ENCODE measurements at regions of chr11 and their contacts with region 1.

Region 1: DNA sequence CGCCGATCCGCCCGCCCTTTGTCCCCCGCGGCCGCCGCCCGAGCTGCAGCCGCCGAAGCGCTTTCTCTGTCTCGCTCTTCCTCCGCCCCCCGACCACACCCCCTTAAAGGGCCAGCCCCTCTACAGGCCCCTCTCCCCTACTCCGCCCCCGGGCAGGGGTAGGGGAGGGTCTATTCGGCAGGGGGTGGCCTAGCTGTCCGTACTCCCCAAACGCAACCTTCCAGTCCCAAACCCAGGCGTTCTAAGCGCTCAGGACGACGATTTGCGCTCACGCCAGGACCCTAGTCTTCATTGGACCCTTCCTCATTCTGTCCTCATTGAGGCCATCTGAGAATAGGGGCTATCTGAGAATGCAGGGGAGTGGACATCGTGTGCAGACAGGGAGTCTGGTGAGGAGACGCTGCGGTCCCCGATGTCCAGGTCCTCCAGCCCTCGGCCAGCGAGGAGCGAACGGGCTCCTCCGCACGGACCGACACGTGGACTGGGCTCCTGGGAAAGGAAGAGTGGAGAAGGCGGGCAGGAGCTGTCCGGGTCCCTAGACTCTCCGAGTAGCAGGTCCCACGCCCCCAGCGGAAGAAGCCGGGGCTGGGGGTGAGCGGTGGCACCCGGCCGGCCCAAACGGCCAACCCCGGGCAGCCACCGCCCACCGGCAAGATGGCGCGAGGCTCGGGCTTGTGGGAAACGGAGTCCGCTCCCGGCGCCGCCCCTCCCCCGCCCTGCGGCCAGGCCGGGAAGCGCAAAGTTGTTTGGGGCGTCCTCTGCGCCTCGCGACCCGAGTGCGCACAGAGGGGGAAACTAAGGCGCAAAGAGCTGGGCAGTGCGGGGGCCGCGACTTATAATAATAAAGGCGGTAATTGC is at the start of gene PPP1R14B:
- DNase-seq: no peak
- ATAC-seq: peak; percentile 50
- H3K4me3 ChIP-seq: peak within 1 kb of the TSS; percentile 99 to 100
- H3K27ac ChIP-seq: peak within 1 kb of the TSS; percentile 94
- H3K4me1 ChIP-seq: peaks cover 36 to 76% of the 10 kb centered on the region in 2 experiments
- H3K27me3 ChIP-seq: no peaks in the 10 kb centered on the region
- CTCF ChIP-seq: no peak
- POLR2A ChIP-seq: peak; percentile 42
- RAD21 ChIP-seq: no peak
- total RNA-seq, gene PPP1R14B: 332 TPM

Region 2: GRCh38 chr11:64074239-64074638 is 172.9 kb before region 1 on chr11:
- CTCF ChIA-PET with region 1: no interaction called
- POLR2A ChIA-PET with region 1: no interaction called
- RAD21 ChIA-PET with region 1: no interaction called
- intact Hi-C with region 1: no loop called
- DNase-seq: no peak
- ATAC-seq: peak; percentile 31; the same call in 1 of the 2 replicates
- H3K4me3 ChIP-seq: no peak overlapping the region
- H3K27ac ChIP-seq: no peak overlapping the region
- H3K4me1 ChIP-seq: peaks cover 0 to 3% of the 10 kb centered on the region in 2 experiments; a peak in 1 of 4 replicates
- H3K27me3 ChIP-seq: no peaks in the 10 kb centered on the region
- CTCF ChIP-seq: no peak
- POLR2A ChIP-seq: no peak
- RAD21 ChIP-seq: no peak

Region 3: DNA sequence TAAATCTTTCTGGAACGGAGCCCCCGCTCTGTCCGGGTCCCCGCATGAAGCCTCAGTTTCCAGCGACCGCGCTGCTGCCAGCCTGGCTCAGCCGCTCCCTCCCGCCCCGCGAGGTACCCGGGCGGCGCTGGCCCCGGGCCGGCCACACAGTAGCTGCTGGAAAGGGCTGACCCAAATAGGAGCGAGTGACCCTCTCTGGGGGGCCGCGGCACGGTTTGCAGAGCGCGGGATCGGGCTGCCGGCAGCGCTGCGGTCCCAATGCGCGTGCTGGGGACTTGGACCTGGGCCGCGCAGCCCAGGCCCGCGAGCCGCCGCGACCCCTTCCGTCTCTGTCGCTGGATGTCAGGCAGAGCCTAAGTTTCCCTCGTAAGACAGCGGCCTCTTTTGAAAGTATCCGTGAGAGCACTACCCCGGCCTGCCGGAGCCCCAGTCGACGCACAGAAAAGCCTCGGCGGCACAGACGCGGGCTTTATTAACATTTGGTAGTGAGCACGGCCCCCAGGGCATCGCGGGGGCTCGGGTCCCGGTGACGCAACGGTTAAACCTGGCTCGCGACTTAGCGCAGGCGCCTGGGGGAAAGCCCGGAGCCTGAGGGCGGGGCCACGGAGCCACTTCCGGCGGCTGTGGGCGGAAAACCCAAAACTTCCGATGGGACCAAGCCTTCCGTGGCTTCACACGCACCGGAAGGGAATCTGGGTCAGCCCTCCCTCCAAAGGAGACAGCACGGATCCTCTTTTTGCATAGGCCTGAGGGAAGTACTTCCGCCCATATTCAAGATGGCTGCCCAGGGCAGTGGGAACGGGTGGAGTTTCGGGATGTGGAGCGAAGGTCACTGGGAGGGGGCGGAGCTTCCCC is 22.5 kb after region 1 on chr11:
- CTCF ChIA-PET with region 1: interaction called, 11 read pairs
- POLR2A ChIA-PET with region 1: interaction called, 29 read pairs
- RAD21 ChIA-PET with region 1: no interaction called
- intact Hi-C with region 1: no loop called
- DNase-seq: peak; percentile 99
- ATAC-seq: peak; percentile 83
- H3K4me3 ChIP-seq: peak overlapping the region; percentile 72 to 98
- H3K27ac ChIP-seq: peak overlapping the region; percentile 95
- H3K4me1 ChIP-seq: peaks cover 18 to 31% of the 10 kb centered on the region in 2 experiments; a peak in 3 of 4 replicates
- H3K27me3 ChIP-seq: no peaks in the 10 kb centered on the region
- CTCF ChIP-seq: no peak
- POLR2A ChIP-seq: peak; percentile 14
- RAD21 ChIP-seq: no peak

Region 4: DNA sequence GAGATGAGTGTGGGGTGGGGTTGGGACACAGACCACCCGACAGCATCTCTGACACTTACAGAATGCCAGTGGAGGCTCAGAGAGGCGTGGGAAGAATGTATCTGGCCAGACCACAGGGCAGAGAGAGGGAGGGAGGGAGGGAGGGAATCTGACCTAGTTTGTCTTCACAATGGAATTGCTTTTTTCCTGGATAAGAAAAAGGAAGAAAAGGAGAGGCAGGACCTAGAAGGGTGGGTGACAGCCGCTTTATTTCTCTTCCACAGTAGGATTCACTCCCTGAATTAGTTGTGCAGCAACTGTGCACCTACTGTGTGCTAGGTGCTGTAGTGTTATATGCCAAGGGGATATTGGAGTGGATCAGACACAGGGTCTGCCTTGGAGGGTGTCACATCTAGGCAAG is 47.7 kb after region 1 on chr11:
- CTCF ChIA-PET with region 1: no interaction called
- POLR2A ChIA-PET with region 1: no interaction called
- RAD21 ChIA-PET with region 1: no interaction called
- intact Hi-C with region 1: no loop called
- DNase-seq: no peak
- ATAC-seq: no peak
- H3K4me3 ChIP-seq: no peak overlapping the region
- H3K27ac ChIP-seq: no peak overlapping the region
- H3K4me1 ChIP-seq: peaks cover 0 to 8% of the 10 kb centered on the region in 2 experiments; a peak in 2 of 4 replicates
- H3K27me3 ChIP-seq: no peaks in the 10 kb centered on the region
- CTCF ChIP-seq: no peak
- POLR2A ChIP-seq: no peak
- RAD21 ChIP-seq: no peak

Region 5: DNA sequence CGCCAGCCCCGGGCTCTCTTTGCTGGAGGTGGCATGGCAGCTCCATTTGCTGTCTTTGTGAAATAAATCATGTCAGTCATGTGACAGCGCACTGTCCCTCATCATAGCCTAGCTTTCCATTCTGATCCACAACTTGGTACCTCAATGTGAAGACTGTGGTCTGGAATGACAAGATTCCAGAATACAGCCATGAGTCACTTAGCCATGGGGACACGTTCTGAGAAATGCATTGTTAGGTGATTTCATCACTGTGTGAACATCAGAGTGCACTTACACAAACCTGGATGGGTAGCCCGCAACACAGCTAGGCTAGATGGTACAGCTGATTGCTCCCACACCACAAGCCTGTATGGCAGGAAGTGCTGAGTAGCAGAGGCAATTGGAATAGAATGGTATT is 139.2 kb after region 1 on chr11:
- CTCF ChIA-PET with region 1: no interaction called
- POLR2A ChIA-PET with region 1: no interaction called
- RAD21 ChIA-PET with region 1: no interaction called
- intact Hi-C with region 1: no loop called
- DNase-seq: peak; percentile 38
- ATAC-seq: peak; percentile 65
- H3K4me3 ChIP-seq: no peak overlapping the region
- H3K27ac ChIP-seq: no peak overlapping the region
- H3K4me1 ChIP-seq: peaks cover 8 to 35% of the 10 kb centered on the region in 2 experiments
- H3K27me3 ChIP-seq: no peaks in the 10 kb centered on the region
- CTCF ChIP-seq: no peak
- POLR2A ChIP-seq: no peak
- RAD21 ChIP-seq: no peak

Region 6: GRCh38 chr11:64419818-64420485 is 172.9 kb after region 1 on chr11:
- CTCF ChIA-PET with region 1: no interaction called
- POLR2A ChIA-PET with region 1: no interaction called
- RAD21 ChIA-PET with region 1: no interaction called
- intact Hi-C with region 1: no loop called
- DNase-seq: no peak
- ATAC-seq: no peak
- H3K4me3 ChIP-seq: no peak overlapping the region
- H3K27ac ChIP-seq: no peak overlapping the region
- H3K4me1 ChIP-seq: no peaks in the 10 kb centered on the region
- H3K27me3 ChIP-seq: no peaks in the 10 kb centered on the region
- CTCF ChIP-seq: no peak
- POLR2A ChIP-seq: no peak
- RAD21 ChIP-seq: no peak

Measured in HCT116 (cell line).